ENCODE measurements at regions of chr2 and their contacts with region 1.

Region 1: GRCh38 chr2:43495727-43496126 is 100.1 kb downstream of the THADA start:
- DNase-seq: no peak
- H3K4me3 ChIP-seq: no peak overlapping the region
- H3K27ac ChIP-seq: no peak overlapping the region
- H3K4me1 ChIP-seq: peaks cover 0 to 3% of the 10 kb centered on the region in 2 experiments; a peak in 1 of 4 replicates
- H3K27me3 ChIP-seq: no peaks in the 10 kb centered on the region
- CTCF ChIP-seq: no peak
- EP300 ChIP-seq: no peak
- RAD21 ChIP-seq: no peak

Region 2: GRCh38 chr2:43508209-43508608 is 12.5 kb after region 1 on chr2:
- CTCF ChIA-PET with region 1: interaction called, 10 read pairs
- POLR2A ChIA-PET with region 1: no interaction called
- DNase-seq: no peak
- H3K4me3 ChIP-seq: no peak overlapping the region
- H3K27ac ChIP-seq: peak overlapping the region in 1 of 2 experiments; percentile 31; a peak in 1 of 4 replicates
- H3K4me1 ChIP-seq: peaks cover 0 to 15% of the 10 kb centered on the region in 2 experiments; a peak in 1 of 4 replicates
- H3K27me3 ChIP-seq: no peaks in the 10 kb centered on the region
- CTCF ChIP-seq: no peak
- EP300 ChIP-seq: no peak
- RAD21 ChIP-seq: no peak

Region 3: GRCh38 chr2:43542285-43542937 is 46.7 kb after region 1 on chr2:
- CTCF ChIA-PET with region 1: interaction called, 17 read pairs
- POLR2A ChIA-PET with region 1: no interaction called
- DNase-seq: peak; percentile 52
- H3K4me3 ChIP-seq: no peak overlapping the region
- H3K27ac ChIP-seq: peak overlapping the region in 1 of 2 experiments; percentile 28; a peak in 1 of 4 replicates
- H3K4me1 ChIP-seq: peaks cover 8 to 13% of the 10 kb centered on the region in 2 experiments
- H3K27me3 ChIP-seq: no peaks in the 10 kb centered on the region
- CTCF ChIP-seq: peak; percentile 78
- EP300 ChIP-seq: no peak
- RAD21 ChIP-seq: peak; percentile 81

Region 4: GRCh38 chr2:43648994-43649701 is 153.4 kb after region 1 on chr2:
- CTCF ChIA-PET with region 1: no interaction called
- POLR2A ChIA-PET with region 1: no interaction called
- DNase-seq: no peak
- H3K4me3 ChIP-seq: no peak overlapping the region
- H3K27ac ChIP-seq: no peak overlapping the region; a peak in 1 of 4 replicates
- H3K4me1 ChIP-seq: no peaks in the 10 kb centered on the region
- H3K27me3 ChIP-seq: no peaks in the 10 kb centered on the region
- CTCF ChIP-seq: no peak
- EP300 ChIP-seq: no peak
- RAD21 ChIP-seq: no peak

Region 5: DNA sequence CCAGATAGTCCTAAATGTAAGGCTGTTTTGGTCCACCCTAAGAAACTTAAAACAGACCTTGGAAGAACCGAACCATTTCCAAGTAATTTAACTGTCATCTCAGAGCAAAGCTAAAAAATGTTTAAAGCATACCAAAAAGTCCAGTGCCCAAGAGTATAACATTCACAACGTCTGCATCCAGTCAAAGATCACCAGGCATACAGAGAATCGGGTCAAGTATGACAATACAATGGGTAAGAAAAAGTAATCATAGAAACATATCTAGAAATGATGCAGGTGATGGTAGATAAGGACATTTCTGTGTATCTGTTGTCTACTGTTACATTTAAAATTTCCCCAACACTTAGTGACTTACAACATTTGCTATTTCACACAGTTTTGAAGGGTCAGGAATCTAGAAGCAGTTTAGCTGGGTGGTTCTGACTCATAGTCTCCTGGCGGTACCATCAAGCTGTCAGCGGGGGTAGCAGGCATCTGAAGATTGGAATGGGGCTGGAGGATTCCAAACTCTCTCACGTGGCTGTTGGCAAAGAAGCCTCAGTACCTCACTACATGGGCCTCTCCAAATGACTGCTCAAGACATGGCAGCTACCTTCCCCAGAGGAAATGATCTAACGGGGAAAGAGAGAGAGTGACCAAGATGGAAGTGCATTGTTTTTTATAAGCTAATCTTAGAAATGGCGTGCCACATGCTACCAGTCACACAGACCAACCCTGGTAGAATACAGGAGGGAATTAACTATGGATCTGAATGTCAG is 241.5 kb after region 1 on chr2:
- CTCF ChIA-PET with region 1: no interaction called
- POLR2A ChIA-PET with region 1: no interaction called
- DNase-seq: no peak
- H3K4me3 ChIP-seq: no peak overlapping the region
- H3K27ac ChIP-seq: peak overlapping the region; percentile 30 to 63; a peak in 3 of 4 replicates
- H3K4me1 ChIP-seq: peaks cover 0 to 9% of the 10 kb centered on the region in 2 experiments; a peak in 3 of 4 replicates
- H3K27me3 ChIP-seq: no peaks in the 10 kb centered on the region
- CTCF ChIP-seq: no peak
- EP300 ChIP-seq: peak in 1 of 2 experiments; percentile 65; a peak in 2 of 4 replicates
- RAD21 ChIP-seq: no peak